ENCODE measurements at regions of chr5 and their contacts with region 1.

Region 1: DNA sequence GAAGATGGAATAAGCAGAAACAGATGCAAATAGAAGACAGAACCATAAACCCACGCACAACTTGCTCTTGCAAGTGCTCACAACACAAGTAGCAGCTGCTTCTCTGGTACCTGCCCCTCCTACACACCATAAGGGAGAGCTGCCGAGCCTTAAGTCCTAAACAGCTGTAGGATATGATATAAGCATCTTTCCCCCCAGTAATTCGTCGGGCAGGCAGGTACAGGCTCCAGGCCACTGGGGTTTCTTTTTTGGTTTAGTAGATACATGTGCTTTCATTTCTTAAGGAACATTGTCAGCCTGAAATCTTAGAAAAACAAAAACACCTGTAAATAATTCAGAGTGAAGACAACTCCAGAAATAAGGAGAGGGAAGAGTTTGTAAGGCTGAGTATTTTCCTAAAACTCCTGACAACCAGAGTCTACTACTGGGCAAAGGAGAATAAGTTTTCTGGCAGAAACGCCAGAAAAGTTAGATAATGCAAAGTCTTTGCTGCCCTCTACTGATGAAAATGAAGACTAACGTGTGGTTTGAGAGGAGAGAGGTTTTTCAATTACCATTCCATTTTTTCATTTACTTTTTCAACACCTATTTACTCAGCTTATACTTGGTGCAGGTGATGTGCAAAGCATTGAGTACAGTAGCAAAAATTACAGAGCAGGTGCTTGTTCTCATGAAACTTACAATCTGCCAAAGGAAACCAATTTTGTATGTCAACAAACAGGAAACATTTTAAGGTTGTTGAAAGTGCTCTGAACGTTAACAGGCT is 20.1 kb upstream of the TCERG1 start:
- DNase-seq: peak; percentile 26
- ATAC-seq: peak; percentile 81
- H3K4me3 ChIP-seq: no peak overlapping the region
- H3K27ac ChIP-seq: no peak overlapping the region
- H3K4me1 ChIP-seq: no peaks in the 10 kb centered on the region
- H3K27me3 ChIP-seq: no peaks in the 10 kb centered on the region
- CTCF ChIP-seq: peak; percentile 60 to 80 (median 63); a peak in 5 of 6 replicates
- POLR2A ChIP-seq: no peak
- RAD21 ChIP-seq: peak; percentile 89

Region 2: GRCh38 chr5:145908205-145908945 is 518.7 kb before region 1 on chr5:
- CTCF ChIA-PET with region 1: no interaction called
- POLR2A ChIA-PET with region 1: no interaction called
- RAD21 ChIA-PET with region 1: no interaction called
- intact Hi-C with region 1: loop called (anchors 1 kb)
- DNase-seq: peak; percentile 18
- ATAC-seq: peak; percentile 76
- H3K4me3 ChIP-seq: no peak overlapping the region
- H3K27ac ChIP-seq: no peak overlapping the region
- H3K4me1 ChIP-seq: no peaks in the 10 kb centered on the region
- H3K27me3 ChIP-seq: no peaks in the 10 kb centered on the region
- CTCF ChIP-seq: peak; percentile 38 to 65 (median 50); a peak in 4 of 6 replicates
- POLR2A ChIP-seq: no peak
- RAD21 ChIP-seq: peak; percentile 68

Region 3: GRCh38 chr5:146173597-146173996 is 253.4 kb before region 1 on chr5:
- CTCF ChIA-PET with region 1: no interaction called
- POLR2A ChIA-PET with region 1: no interaction called
- RAD21 ChIA-PET with region 1: no interaction called
- intact Hi-C with region 1: loop called (anchors 5 kb)
- DNase-seq: no peak
- ATAC-seq: no peak
- H3K4me3 ChIP-seq: no peak overlapping the region
- H3K27ac ChIP-seq: no peak overlapping the region
- H3K4me1 ChIP-seq: no peaks in the 10 kb centered on the region
- H3K27me3 ChIP-seq: no peaks in the 10 kb centered on the region
- CTCF ChIP-seq: no peak
- POLR2A ChIP-seq: no peak
- RAD21 ChIP-seq: no peak

Region 4: GRCh38 chr5:146291421-146292074 is 135.5 kb before region 1 on chr5:
- CTCF ChIA-PET with region 1: interaction called, 3 read pairs
- POLR2A ChIA-PET with region 1: no interaction called
- RAD21 ChIA-PET with region 1: no interaction called
- intact Hi-C with region 1: loop called (anchors 1 kb)
- DNase-seq: peak; percentile 23
- ATAC-seq: peak; percentile 81
- H3K4me3 ChIP-seq: no peak overlapping the region
- H3K27ac ChIP-seq: no peak overlapping the region
- H3K4me1 ChIP-seq: peaks cover 13 to 30% of the 10 kb centered on the region in 2 experiments
- H3K27me3 ChIP-seq: no peaks in the 10 kb centered on the region
- CTCF ChIP-seq: peak; percentile 59 to 72 (median 61); a peak in 5 of 6 replicates
- POLR2A ChIP-seq: no peak
- RAD21 ChIP-seq: peak; percentile 65